Caco-2 (cell line): ENCODE measurements at regions of chr2 and their contacts with region 1.

Region 1: GRCh38 chr2:57906152-57906732 is 140.4 kb upstream of the VRK2 start:
- DNase-seq: peak in 1 of 2 experiments; percentile 44
- H3K4me3 ChIP-seq: no peak overlapping the region
- H3K4me3 Mint-ChIP-seq: no peak overlapping the region
- H3K27ac Mint-ChIP-seq: no peak overlapping the region
- H3K4me1 ChIP-seq: no peaks in the 10 kb centered on the region
- H3K4me1 Mint-ChIP-seq: no peaks in the 10 kb centered on the region
- H3K27me3 ChIP-seq: no peaks in the 10 kb centered on the region
- H3K27me3 Mint-ChIP-seq: no peaks in the 10 kb centered on the region
- CTCF ChIP-seq: peak; percentile 69 to 90

Region 2: GRCh38 chr2:58046585-58047372 is 140.5 kb after region 1 on chr2 and contains the start of gene VRK2:
- CTCF ChIA-PET with region 1: no interaction called
- POLR2A ChIA-PET with region 1: no interaction called
- intact Hi-C with region 1: loop called (anchors 2 kb)
- DNase-seq: peak; percentile 95 to 96
- H3K4me3 ChIP-seq: peak within 1 kb of the TSS; percentile 66
- H3K4me3 Mint-ChIP-seq: peak within 1 kb of the TSS; percentile 86
- H3K27ac Mint-ChIP-seq: peak within 1 kb of the TSS; percentile 65
- H3K4me1 ChIP-seq: peaks cover 30% of the 10 kb centered on the region
- H3K4me1 Mint-ChIP-seq: peaks cover 26% of the 10 kb centered on the region
- H3K27me3 ChIP-seq: no peaks in the 10 kb centered on the region
- H3K27me3 Mint-ChIP-seq: no peaks in the 10 kb centered on the region
- CTCF ChIP-seq: peak in 1 of 2 experiments; percentile 16
- total RNA-seq, gene VRK2: 33.1 and 35.4 TPM in 2 replicates

Region 3: DNA sequence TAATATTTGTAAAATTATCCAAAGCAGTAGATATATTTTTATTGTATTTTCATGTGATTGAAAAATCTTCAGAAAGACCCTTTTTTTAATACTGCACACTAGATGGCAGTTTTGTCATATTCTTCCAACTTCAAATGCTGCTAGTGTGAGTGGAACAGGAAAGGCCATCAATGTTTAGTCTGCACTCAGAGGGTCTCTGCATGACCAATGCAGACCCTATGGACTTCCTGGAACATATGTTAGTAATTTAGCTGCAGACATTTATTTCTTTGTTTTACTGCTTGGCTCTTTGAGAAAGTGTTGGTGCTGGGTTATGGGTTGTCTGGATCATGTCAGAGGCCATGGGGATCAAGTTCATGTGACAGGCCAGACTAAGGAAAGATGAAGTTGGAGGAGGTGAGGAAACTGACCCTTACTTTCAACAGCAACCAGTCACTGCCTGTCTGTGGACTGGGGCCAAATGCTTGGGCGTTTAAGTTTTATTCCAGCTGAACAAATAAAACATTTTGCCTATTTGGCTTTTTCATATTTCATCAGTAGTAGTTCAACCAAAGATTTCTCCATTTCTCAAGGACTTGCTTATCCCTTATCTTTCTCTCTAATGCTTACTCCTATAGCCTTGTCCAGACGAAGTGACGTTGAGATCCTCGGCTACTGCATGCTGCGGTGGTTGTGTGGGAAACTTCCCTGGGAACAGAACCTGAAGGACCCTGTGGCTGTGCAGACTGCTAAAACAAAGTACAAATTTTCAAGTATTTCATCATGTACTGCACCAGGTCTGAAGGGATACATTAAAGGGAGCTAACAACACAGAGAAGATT is 225.2 kb after region 1 on chr2:
- CTCF ChIA-PET with region 1: interaction called, 14 read pairs
- POLR2A ChIA-PET with region 1: no interaction called
- intact Hi-C with region 1: loop called (anchors 5 kb)
- DNase-seq: no peak
- H3K4me3 ChIP-seq: no peak overlapping the region
- H3K4me3 Mint-ChIP-seq: no peak overlapping the region
- H3K27ac Mint-ChIP-seq: no peak overlapping the region
- H3K4me1 ChIP-seq: no peaks in the 10 kb centered on the region
- H3K4me1 Mint-ChIP-seq: no peaks in the 10 kb centered on the region
- H3K27me3 ChIP-seq: no peaks in the 10 kb centered on the region
- H3K27me3 Mint-ChIP-seq: no peaks in the 10 kb centered on the region
- CTCF ChIP-seq: no peak

Region 4: GRCh38 chr2:58156780-58157179 is 250.5 kb after region 1 on chr2:
- CTCF ChIA-PET with region 1: no interaction called
- POLR2A ChIA-PET with region 1: no interaction called
- intact Hi-C with region 1: loop called (anchors 10 kb)
- DNase-seq: no peak
- H3K4me3 ChIP-seq: no peak overlapping the region
- H3K4me3 Mint-ChIP-seq: no peak overlapping the region
- H3K27ac Mint-ChIP-seq: no peak overlapping the region
- H3K4me1 ChIP-seq: no peaks in the 10 kb centered on the region
- H3K4me1 Mint-ChIP-seq: no peaks in the 10 kb centered on the region
- H3K27me3 ChIP-seq: no peaks in the 10 kb centered on the region
- H3K27me3 Mint-ChIP-seq: no peaks in the 10 kb centered on the region
- CTCF ChIP-seq: no peak

Region 5: GRCh38 chr2:58215429-58215828 is 309.2 kb after region 1 on chr2:
- CTCF ChIA-PET with region 1: no interaction called
- POLR2A ChIA-PET with region 1: no interaction called
- intact Hi-C with region 1: loop called (anchors 1 kb)
- DNase-seq: no peak
- H3K4me3 ChIP-seq: no peak overlapping the region
- H3K4me3 Mint-ChIP-seq: no peak overlapping the region
- H3K27ac Mint-ChIP-seq: no peak overlapping the region
- H3K4me1 ChIP-seq: no peaks in the 10 kb centered on the region
- H3K4me1 Mint-ChIP-seq: peaks cover 6% of the 10 kb centered on the region
- H3K27me3 ChIP-seq: no peaks in the 10 kb centered on the region
- H3K27me3 Mint-ChIP-seq: no peaks in the 10 kb centered on the region
- CTCF ChIP-seq: no peak

Region 6: DNA sequence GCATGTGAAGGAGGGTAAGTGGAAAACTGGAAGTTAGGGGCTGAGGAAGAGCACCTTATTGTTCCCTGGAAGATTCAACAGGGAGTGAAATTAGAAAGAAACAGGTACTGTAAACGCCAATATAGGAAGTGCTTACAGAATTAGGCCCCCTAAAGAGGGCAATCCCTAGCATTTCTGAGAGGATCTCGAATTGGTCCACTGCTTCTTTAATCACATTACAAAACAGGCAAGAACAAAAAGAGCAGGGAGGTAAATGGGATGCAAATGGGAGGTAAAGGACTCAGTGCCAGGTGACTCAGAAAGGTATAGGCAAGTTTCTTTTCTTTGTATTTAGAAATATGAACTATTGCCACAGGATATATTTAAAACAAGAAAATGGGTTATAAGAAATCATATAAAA is 451.3 kb after region 1 on chr2:
- CTCF ChIA-PET with region 1: interaction called, 3 read pairs
- POLR2A ChIA-PET with region 1: no interaction called
- intact Hi-C with region 1: loop called (anchors 5 kb)
- DNase-seq: no peak
- H3K4me3 ChIP-seq: no peak overlapping the region
- H3K4me3 Mint-ChIP-seq: no peak overlapping the region
- H3K27ac Mint-ChIP-seq: no peak overlapping the region
- H3K4me1 ChIP-seq: no peaks in the 10 kb centered on the region
- H3K4me1 Mint-ChIP-seq: no peaks in the 10 kb centered on the region
- H3K27me3 ChIP-seq: no peaks in the 10 kb centered on the region; the same call in 1 of the 2 replicates
- H3K27me3 Mint-ChIP-seq: peaks cover 2% of the 10 kb centered on the region
- CTCF ChIP-seq: no peak

Region 7: DNA sequence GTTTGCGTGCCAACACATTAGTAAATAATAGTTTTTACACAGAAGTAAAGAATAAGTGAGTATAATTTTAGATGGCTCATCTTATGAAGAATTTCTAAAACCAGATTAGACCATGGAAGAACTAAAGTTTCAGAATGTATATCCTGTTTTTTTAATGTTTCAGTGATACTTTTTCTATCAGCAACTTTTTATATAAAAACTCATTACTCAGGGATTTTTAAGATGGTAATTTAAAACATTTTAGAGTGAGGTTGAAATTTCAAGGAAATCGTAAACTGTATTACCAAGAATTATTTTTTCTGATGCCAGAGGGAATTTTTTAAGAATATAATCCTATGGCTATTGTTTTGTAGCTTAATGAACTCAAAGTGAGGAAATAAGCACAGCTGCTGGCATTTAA is 463.4 kb after region 1 on chr2:
- CTCF ChIA-PET with region 1: no interaction called
- POLR2A ChIA-PET with region 1: no interaction called
- intact Hi-C with region 1: no loop called
- DNase-seq: no peak
- H3K4me3 ChIP-seq: no peak overlapping the region
- H3K4me3 Mint-ChIP-seq: no peak overlapping the region
- H3K27ac Mint-ChIP-seq: no peak overlapping the region
- H3K4me1 ChIP-seq: no peaks in the 10 kb centered on the region
- H3K4me1 Mint-ChIP-seq: no peaks in the 10 kb centered on the region
- H3K27me3 ChIP-seq: no peaks in the 10 kb centered on the region
- H3K27me3 Mint-ChIP-seq: peaks cover 3% of the 10 kb centered on the region
- CTCF ChIP-seq: no peak

Region 8: GRCh38 chr2:58448065-58448507 is 541.8 kb after region 1 on chr2:
- CTCF ChIA-PET with region 1: interaction called, 11 read pairs
- POLR2A ChIA-PET with region 1: no interaction called
- intact Hi-C with region 1: loop called (anchors 1 kb)
- DNase-seq: peak; percentile 77 to 78
- H3K4me3 ChIP-seq: no peak overlapping the region
- H3K4me3 Mint-ChIP-seq: no peak overlapping the region
- H3K27ac Mint-ChIP-seq: no peak overlapping the region
- H3K4me1 ChIP-seq: no peaks in the 10 kb centered on the region
- H3K4me1 Mint-ChIP-seq: no peaks in the 10 kb centered on the region
- H3K27me3 ChIP-seq: no peaks in the 10 kb centered on the region
- H3K27me3 Mint-ChIP-seq: peaks cover 4% of the 10 kb centered on the region
- CTCF ChIP-seq: peak in 1 of 2 experiments; percentile 73